Posterior vena cava (tissue), 2 donors: ENCODE measurements at regions of chr1 and their contacts with region 1.

Region 1: GRCh38 chr1:217791091-217791490 is 159.9 kb downstream of the SPATA17 start:
- DNase-seq: no peak

Region 2: GRCh38 chr1:217660353-217661062 is 130.6 kb before region 1 on chr1:
- intact Hi-C with region 1: loop called in 1 of 2 experiments (anchors 5 kb)
- DNase-seq: no peak

Region 3: DNA sequence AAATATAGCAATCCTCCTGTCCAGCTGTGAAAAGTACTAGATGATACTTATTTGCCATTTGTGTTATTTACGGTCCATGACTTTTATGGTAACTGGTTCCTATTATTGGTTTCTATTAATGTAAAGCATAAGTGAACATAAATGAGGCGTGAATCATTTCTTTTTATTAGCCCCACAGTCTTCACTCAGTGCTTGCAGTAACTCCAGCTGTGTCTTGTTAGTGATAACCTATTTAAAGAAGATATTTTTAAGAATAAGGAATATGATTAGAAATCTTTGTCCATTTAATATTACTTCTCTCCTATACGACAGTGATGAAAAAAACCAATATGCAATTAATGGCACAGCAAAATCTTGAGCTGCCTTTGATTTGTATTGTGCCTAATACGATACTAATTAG is 10.0 kb before region 1 on chr1:
- intact Hi-C with region 1: loop called in 1 of 2 experiments (anchors 1 kb)
- DNase-seq: no peak